ENCODE measurements at regions of chr1 and their contacts with region 1.

Region 1: DNA sequence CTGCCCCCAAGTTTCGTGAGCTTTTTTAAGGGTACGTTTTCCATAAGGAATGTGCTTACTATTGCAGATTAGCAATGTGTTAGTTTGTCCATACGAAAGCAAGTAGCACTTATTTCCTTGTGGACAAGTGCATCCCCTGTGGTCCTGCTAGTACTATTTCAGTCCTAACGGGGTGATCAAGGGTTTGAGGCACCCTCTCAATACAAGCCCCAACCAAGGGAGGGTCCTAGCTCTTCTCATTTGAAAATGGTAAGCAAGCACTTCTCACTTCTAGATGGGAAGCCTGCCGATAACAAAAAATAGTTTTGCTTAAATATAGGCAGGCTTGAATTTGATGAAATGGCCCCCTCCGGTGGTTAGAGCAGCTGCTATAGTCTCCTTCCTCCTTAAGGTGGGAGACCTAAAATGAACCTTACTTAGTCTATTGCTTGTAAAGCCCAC is 64.0 kb upstream of the HMCN1 start:
- DNase-seq: no peak
- H3K4me3 ChIP-seq: no peak overlapping the region
- H3K27ac ChIP-seq: no peak overlapping the region
- H3K4me1 ChIP-seq: no peaks in the 10 kb centered on the region
- H3K27me3 ChIP-seq: no peaks in the 10 kb centered on the region
- CTCF ChIP-seq: peak; percentile 34

Region 2: DNA sequence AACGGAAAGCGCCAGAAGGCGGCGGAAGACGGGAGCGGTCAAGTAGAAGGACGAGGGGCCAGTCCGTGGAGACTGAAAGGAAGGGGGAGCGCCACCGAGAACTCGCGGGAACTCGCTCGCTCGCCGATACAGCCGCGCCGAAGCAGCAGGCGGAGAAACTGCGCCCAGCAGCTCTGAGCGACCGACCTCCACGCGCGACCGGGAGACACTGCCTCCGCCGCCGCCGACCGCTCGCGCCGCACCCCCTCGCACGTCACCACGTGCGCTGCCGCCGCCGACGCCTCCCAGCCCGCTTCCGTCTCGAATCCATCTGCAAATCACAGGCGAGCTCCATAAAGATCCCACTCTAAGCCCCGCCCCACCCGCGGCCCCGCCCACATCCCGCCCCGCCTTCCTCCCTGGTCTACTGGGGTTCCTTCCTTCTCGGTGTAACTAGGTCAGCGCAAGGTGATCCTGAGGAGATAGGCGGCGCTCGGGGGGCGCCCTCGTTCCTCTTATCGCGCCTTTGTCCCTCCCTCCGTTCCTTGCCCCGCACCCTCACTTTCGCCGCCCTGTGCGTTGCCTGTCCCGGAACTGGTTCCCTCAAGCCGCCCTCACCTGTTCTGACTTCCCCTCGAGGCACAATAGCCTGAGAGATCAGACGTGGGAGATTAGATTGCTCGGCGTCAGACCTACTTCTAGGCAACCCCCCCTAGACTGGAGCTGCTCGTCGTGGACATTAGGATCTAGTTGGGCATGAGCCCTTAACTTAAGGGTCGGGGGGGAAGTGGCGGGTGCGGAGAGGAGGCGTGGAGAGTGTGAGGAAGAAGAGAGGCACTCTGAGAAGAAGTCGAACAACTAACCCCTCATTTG is 352.9 kb before region 1 on chr1 and contains the start of gene IVNS1ABP:
- intact Hi-C with region 1: loop called (anchors 10 kb)
- DNase-seq: peak; percentile 98
- H3K4me3 ChIP-seq: peak within 1 kb of the TSS; percentile 68
- H3K27ac ChIP-seq: peak within 1 kb of the TSS; percentile 95
- H3K4me1 ChIP-seq: peaks cover 12% of the 10 kb centered on the region
- H3K27me3 ChIP-seq: no peaks in the 10 kb centered on the region
- CTCF ChIP-seq: peak; percentile 10
- total RNA-seq, gene IVNS1ABP: 87.2 to 141 TPM